Dorsolateral prefrontal cortex (tissue), 120 donors: ENCODE measurements at regions of chr14 and their contacts with region 1.

Region 1: DNA sequence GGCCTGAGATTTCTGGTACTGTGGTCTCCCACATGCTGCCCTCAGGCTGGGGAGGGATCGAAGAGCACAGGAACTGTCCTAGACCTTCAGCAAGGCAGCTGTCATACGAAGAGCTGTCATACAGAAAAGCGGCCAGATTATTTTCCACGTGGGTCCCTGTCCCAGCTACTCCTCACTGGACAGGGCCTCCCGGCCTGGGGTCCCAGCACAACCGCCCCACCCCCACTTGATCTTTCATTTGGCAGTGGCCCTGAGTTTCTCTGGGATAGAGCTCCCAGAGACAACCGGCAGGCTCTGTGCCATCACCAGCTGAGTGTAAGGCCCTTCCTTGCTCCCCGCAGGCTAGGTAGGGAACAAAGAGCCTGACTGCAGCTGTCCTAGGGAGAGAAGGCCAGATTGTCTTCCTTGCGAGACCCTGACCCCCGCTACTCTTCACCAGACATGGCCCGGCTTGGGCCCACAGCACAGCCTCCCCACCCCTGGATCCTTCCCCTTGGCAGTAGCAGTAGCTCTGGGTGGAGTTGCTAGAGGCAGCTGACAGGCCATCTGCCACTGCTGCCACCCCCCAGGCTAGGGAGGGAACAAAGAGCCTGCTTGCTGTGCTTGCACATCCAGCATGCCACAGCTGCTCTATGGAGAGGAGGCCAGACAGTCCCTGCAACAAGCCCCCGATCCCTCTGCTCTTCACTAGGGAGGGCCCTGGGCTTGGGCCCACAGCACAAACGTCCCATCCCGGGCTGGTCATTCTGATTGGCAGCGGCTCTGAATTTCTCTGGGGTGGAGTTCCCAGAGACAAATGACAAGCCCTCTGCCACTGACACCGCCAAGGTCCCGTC is 3.1 kb upstream of the OR4N2 start:
- DNase-seq: peak in 9 of 10 donors; percentile 77 to 97 (median 88)
- H3K4me3 ChIP-seq: peak overlapping the region in 22 of 59 donors; percentile 1 to 52 (median 26)
- H3K27ac ChIP-seq: peak overlapping the region in 55 of 59 donors; percentile 42 to 98 (median 88)
- H3K27me3 ChIP-seq: peaks cover 0 to 38% (median 4%) of the 10 kb centered on the region in 45 donors
- CTCF ChIP-seq: peak in 2 of 56 donors; percentile 9 to 14

Region 2: DNA sequence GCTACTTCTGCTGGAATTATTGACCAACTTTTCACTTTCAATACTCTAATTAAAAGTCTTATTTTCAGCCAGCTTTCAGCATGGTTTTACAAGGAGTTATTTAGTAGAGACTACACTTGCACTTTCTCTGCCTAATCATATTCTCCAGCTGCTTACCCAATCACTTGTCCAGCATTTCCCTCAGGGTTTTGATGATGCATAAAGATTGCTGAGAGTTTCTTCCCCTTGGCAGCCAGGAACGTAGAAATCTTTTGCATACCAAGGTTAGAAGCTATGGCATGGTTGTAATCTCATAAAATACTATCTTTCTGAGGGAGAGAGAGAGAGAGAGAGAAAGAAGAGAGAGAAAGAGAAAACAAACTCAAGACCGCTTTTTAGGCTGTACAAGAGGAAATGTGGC is 46.3 kb before region 1 on chr14:
- intact Hi-C with region 1: loop called in 1 of 2 experiments (anchors 2 kb)
- DNase-seq: no peak
- H3K4me3 ChIP-seq: no peak overlapping the region
- H3K27ac ChIP-seq: no peak overlapping the region
- H3K27me3 ChIP-seq: peaks cover 0 to 30% (median 0%) of the 10 kb centered on the region in 45 donors
- CTCF ChIP-seq: no peak

Region 3: GRCh38 chr14:19838433-19838832 is 37.9 kb after region 1 on chr14:
- intact Hi-C with region 1: no loop called
- DNase-seq: no peak
- H3K4me3 ChIP-seq: no peak overlapping the region
- H3K27ac ChIP-seq: no peak overlapping the region
- H3K27me3 ChIP-seq: peaks cover 0 to 34% (median 3%) of the 10 kb centered on the region in 45 donors
- CTCF ChIP-seq: no peak

Region 4: GRCh38 chr14:19878029-19878642 is 77.6 kb after region 1 on chr14:
- intact Hi-C with region 1: loop called in 1 of 2 experiments (anchors 5 kb)
- DNase-seq: no peak
- H3K4me3 ChIP-seq: no peak overlapping the region
- H3K27ac ChIP-seq: no peak overlapping the region
- H3K27me3 ChIP-seq: peaks cover 0 to 16% (median 0%) of the 10 kb centered on the region in 45 donors
- CTCF ChIP-seq: peak; percentile 16 to 94 (median 66)

Region 5: DNA sequence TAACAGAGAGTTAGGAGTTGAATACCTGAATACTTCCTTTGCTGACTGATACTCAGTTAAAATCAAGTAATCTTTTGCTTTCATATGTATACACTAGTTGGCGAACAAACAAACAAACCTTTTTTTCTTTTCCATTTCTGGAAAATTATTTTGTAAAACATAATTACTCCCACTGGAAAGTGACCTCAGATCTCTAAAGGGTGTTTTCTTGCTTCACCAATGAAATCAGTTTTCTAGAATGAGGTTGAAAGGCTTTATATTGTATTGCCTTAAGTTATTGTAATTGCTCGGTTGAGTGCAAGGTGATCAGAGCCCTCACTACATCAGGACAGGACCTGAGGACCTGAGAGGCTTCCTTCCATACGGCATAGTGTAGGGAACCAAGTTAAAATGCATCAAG is 130.1 kb after region 1 on chr14 and contains the start of gene OR4K1:
- intact Hi-C with region 1: no loop called
- DNase-seq: no peak
- H3K4me3 ChIP-seq: no peak within 1 kb of the TSS
- H3K27ac ChIP-seq: no peak within 1 kb of the TSS
- H3K27me3 ChIP-seq: peaks cover 0 to 52% (median 8%) of the 10 kb centered on the region in 45 donors
- CTCF ChIP-seq: no peak
- total RNA-seq, gene OR4K1: not detected

Region 6: DNA sequence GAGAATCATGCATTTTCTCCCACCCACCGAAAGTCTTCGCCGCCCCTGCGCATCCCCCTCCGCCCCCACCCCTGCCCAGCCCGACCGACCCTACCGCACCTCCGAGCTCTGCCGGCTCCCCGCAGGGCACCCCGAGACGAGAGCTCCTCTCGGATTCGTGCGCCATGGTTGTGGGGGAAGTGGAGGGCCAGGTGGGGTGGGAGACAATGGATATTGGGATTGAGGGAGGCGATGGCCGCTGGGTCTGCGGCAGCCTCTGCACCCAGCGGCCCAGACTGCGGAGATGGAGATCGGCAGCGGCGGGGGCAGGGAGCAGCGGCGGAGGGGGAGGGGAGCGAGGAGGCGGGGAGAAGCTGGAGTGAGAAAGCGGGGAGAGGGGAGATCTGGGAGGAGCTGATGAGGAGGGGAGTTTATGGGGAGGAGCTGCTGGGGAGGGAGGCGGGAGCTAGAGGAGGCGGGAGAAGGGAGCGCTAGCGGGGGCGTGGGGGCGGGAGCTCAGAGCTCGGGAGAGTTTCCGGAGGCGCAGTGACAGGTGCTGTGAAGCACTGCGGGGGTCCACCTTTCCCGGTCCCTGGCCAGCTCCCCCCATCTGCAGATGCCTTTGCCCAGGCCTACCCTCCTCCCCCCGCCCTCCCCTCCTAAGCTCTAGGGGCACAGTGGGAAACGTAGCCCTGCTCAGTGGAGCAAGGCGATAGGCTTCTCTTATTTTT is 1725.6 kb after region 1 on chr14 and contains the start of gene SALL2:
- intact Hi-C with region 1: no loop called
- DNase-seq: peak; percentile 45 to 92 (median 73)
- H3K4me3 ChIP-seq: peak within 1 kb of the TSS; percentile 36 to 86 (median 74)
- H3K27ac ChIP-seq: peak within 1 kb of the TSS in 54 of 59 donors; percentile 3 to 93 (median 76)
- H3K27me3 ChIP-seq: no peaks in the 10 kb centered on the region
- CTCF ChIP-seq: peak in 1 of 56 donors; percentile 17
- total RNA-seq, gene SALL2: 23.3 to 80.6 (median 42.7) TPM